ENCODE measurements at regions of chr14 and their contacts with region 1.

Region 1: GRCh38 chr14:104766863-104767633 is 14.1 kb downstream of the SIVA1 start:
- DNase-seq: peak in 1 of 4 donors; percentile 75
- ATAC-seq: no peak
- H3K4me3 ChIP-seq: no peak overlapping the region
- H3K27ac ChIP-seq: peak overlapping the region; percentile 5 to 6
- H3K4me1 ChIP-seq: peaks cover 9 to 10% of the 10 kb centered on the region in 2 donors
- H3K27me3 ChIP-seq: no peaks in the 10 kb centered on the region
- CTCF ChIP-seq: no peak

Region 2: GRCh38 chr14:104697892-104698583 is 69.0 kb before region 1 on chr14:
- intact Hi-C with region 1: no loop called
- DNase-seq: no peak
- ATAC-seq: peak; percentile 51
- H3K4me3 ChIP-seq: no peak overlapping the region
- H3K27ac ChIP-seq: peak overlapping the region in 1 of 2 donors; percentile 16
- H3K4me1 ChIP-seq: peaks cover 34 to 62% of the 10 kb centered on the region in 2 donors
- H3K27me3 ChIP-seq: no peaks in the 10 kb centered on the region
- CTCF ChIP-seq: no peak

Region 3: GRCh38 chr14:104826189-104826860 is 59.3 kb after region 1 on chr14:
- intact Hi-C with region 1: loop called in 1 of 2 experiments (anchors 2 kb)
- DNase-seq: peak; percentile 76 to 99 (median 89)
- ATAC-seq: peak; percentile 95
- H3K4me3 ChIP-seq: peak overlapping the region; percentile 48 to 54
- H3K27ac ChIP-seq: peak overlapping the region in 1 of 2 donors; percentile 37
- H3K4me1 ChIP-seq: peaks cover 8 to 25% of the 10 kb centered on the region in 2 donors
- H3K27me3 ChIP-seq: peaks cover 0 to 35% of the 10 kb centered on the region in 2 donors
- CTCF ChIP-seq: peak; percentile 85 to 97

Region 4: GRCh38 chr14:104865644-104866441 is 98.8 kb after region 1 on chr14:
- intact Hi-C with region 1: no loop called
- DNase-seq: peak; percentile 41 to 90 (median 66)
- ATAC-seq: peak; percentile 77
- H3K4me3 ChIP-seq: peak overlapping the region; percentile 52 to 56
- H3K27ac ChIP-seq: peak overlapping the region; percentile 44 to 58
- H3K4me1 ChIP-seq: peaks cover 8 to 30% of the 10 kb centered on the region in 2 donors
- H3K27me3 ChIP-seq: peaks cover 0 to 49% of the 10 kb centered on the region in 2 donors
- CTCF ChIP-seq: no peak

Region 5: DNA sequence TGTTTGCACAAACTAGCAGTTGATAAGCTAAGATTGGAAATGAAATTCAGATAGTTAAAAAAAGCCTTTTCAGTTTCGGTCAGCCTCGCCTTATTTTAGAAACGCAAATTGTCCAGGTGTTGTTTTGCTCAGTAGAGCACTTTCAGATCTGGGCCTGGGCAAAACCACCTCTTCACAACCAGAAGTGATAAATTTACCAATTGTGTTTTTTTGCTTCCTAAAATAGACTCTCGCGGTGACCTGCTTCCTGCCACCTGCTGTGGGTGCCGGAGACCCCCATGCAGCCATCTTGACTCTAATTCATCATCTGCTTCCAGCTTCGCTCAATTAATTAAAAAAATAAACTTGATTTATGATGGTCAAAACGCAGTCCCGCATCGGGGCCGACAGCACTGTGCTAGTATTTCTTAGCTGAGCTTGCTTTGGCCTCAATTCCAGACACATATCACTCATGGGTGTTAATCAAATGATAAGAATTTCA is 1095.0 kb after region 1 on chr14:
- intact Hi-C with region 1: no loop called
- DNase-seq: peak in 2 of 4 donors; percentile 7 to 26
- ATAC-seq: no peak
- H3K4me3 ChIP-seq: no peak overlapping the region
- H3K27ac ChIP-seq: no peak overlapping the region
- H3K4me1 ChIP-seq: no peaks in the 10 kb centered on the region
- H3K27me3 ChIP-seq: peaks cover 0 to 61% of the 10 kb centered on the region in 2 donors
- CTCF ChIP-seq: no peak

Measured in left lung (tissue), 14 donors.